ENCODE measurements at regions of chr2 and their contacts with region 1.

Region 1: DNA sequence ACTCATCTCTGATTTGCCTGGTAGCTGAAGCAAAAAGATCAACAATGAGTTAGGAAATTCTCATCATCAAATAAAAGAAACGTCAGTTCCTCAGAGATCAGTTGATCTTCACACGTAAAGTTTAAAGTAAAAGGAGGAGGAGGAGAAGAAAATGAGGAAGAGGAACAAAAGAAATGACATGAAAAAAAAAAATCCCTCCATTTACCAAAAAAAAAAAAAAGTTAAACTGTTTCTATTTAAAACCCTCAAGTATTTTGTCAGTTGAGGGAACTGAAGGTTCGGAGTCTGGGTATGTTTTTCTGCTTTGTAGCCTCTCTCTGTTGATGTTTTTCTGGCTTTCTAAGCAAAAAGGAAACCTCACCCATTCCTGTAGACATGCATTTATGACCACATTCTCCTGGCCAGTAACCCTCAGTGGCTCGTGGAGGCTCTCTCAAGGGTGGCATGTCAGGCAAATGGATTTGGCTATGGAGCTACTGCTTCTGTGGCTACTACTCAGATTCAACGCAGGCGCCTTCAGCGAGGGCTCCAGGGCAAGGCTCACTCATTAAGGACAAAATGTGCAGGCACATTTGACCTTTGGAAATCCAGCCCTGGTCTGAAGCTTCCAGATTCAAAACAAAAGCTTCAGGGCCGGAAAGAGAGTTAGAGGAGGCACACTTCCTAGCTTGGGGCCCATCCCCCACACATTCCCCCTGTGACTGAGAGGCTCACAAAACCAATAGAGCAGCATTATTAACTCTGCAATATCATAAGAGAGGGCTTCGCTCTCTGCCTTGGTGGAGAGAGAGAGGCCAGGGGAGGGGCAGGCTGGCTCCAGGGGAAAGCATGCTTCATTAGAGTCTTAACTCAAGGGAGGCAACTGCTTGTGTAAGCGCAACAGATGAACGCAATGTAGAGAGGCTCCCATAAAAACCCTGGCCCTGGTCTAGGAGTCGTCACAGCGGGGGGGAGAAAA is 22.3 kb downstream of the KLF7 start:
- DNase-seq: peak; percentile 34
- ATAC-seq: peak; percentile 65
- H3K4me3 Mint-ChIP-seq: peak overlapping the region; percentile 52
- H3K27ac Mint-ChIP-seq: peak overlapping the region; percentile 92
- H3K4me1 Mint-ChIP-seq: peaks cover 61% of the 10 kb centered on the region
- H3K27me3 Mint-ChIP-seq: no peaks in the 10 kb centered on the region
- CTCF ChIP-seq: no peak

Region 2: DNA sequence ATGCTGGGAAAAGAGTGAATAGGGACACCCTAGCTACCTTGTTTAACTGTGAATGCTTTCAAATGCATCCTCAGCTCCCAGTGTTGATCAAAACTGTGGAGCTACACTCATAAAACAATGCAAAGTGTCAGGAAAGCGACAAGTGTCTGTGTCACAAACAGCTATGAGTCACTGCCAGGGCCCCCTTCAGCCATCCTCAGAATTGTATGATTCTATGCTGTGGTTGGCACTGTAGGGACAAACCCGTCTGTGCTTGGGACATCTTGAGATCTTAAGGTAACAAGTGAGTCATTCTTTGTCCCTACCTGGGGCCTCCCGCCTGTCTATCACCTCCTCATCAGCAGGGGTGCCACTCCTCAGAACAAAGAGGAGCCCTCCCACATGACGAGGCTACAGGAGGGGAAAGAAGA is 20.2 kb before region 1 on chr2:
- CTCF ChIA-PET with region 1: no interaction called
- POLR2A ChIA-PET with region 1: interaction called, 17 read pairs
- intact Hi-C with region 1: no loop called
- DNase-seq: no peak
- ATAC-seq: peak; percentile 21
- H3K4me3 Mint-ChIP-seq: no peak overlapping the region
- H3K27ac Mint-ChIP-seq: no peak overlapping the region
- H3K4me1 Mint-ChIP-seq: peaks cover 52% of the 10 kb centered on the region
- H3K27me3 Mint-ChIP-seq: no peaks in the 10 kb centered on the region
- CTCF ChIP-seq: no peak

Region 3: DNA sequence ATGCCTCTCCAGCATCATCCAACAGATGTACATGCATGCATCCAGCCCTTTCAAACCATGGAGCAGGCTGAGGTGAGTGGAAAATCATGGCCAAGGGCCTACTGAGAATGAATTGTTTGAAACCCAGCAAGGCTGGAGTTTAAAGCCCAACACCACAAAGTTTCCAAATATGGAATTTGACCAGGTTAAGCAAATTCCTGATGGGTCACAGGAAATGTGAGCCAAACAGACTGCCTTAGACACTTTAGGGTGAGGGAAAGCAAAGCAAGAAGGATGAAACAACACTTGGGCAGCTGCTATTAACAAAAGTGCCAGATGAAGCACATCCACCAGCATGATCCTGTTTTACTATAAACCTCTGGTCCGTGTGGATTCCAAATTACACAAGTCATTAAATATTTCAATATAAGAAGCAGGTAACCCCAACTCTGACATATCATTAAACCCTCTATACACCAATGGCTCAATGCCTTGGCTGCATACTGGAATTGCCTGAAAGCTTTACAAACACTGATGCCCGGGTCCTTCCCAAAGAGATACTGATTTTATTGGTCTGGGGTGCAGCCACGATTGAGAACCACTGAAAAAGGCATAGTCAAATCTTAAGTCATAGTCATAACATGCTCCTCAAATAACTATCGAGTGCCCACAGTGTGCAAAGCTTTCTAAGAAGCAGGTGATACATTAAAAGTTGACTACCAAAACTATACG is 13.1 kb after region 1 on chr2:
- CTCF ChIA-PET with region 1: interaction called, 6 read pairs
- POLR2A ChIA-PET with region 1: interaction called, 202 read pairs
- intact Hi-C with region 1: loop called (anchors 1 kb)
- DNase-seq: no peak
- ATAC-seq: no peak
- H3K4me3 Mint-ChIP-seq: no peak overlapping the region
- H3K27ac Mint-ChIP-seq: peak overlapping the region; percentile 22
- H3K4me1 Mint-ChIP-seq: peaks cover 73% of the 10 kb centered on the region
- H3K27me3 Mint-ChIP-seq: no peaks in the 10 kb centered on the region
- CTCF ChIP-seq: no peak

Region 4: DNA sequence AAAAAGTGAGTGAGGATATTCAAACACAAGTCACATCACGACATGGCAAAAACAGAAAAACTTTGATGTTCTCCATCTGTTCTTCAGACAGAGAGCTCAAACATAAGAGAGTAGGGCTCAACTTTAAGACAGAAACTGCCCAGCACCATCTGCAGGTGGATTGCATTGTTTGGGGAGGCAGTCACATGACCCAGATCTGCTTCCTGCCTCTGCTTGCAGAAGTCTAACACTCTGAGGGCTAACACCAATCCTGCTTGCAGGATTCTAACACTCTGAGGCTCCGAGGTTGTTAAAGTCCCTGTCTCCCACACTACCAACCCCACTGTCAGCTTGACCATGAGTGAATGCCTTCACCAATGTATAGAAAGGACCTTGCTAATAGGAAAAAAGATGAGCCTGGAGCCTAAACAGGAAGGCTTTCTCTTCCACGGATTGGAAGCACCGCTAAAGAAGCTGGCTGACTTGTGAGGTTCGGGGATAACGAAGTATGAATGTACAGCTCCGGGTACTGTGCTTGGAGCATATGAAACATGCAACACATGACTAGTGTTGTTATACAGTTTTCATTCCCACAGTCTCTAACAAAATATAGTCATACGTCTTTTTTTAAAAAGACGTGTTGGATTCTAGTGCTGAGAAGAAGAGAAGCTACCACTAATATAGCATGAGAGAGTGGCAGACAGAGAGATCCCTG is 209.6 kb after region 1 on chr2:
- CTCF ChIA-PET with region 1: no interaction called
- POLR2A ChIA-PET with region 1: no interaction called
- intact Hi-C with region 1: loop called (anchors 5 kb)
- DNase-seq: no peak
- ATAC-seq: peak; percentile 40
- H3K4me3 Mint-ChIP-seq: no peak overlapping the region
- H3K27ac Mint-ChIP-seq: no peak overlapping the region
- H3K4me1 Mint-ChIP-seq: peaks cover 2% of the 10 kb centered on the region
- H3K27me3 Mint-ChIP-seq: no peaks in the 10 kb centered on the region
- CTCF ChIP-seq: no peak

Measured in activated B cell treated with CpG ODN at 0.5 μM for 24 hours (primary cell).